ENCODE measurements at regions of chr21 and their contacts with region 1.

Region 1: GRCh38 chr21:31088315-31088714 is 50.0 kb upstream of the KRTAP19-8 start:
- DNase-seq: no peak
- ATAC-seq: no peak
- H3K4me3 Mint-ChIP-seq: no peak overlapping the region
- H3K27ac Mint-ChIP-seq: no peak overlapping the region
- H3K4me1 Mint-ChIP-seq: peaks cover 10% of the 10 kb centered on the region
- H3K27me3 Mint-ChIP-seq: peaks cover 47% of the 10 kb centered on the region

Region 2: DNA sequence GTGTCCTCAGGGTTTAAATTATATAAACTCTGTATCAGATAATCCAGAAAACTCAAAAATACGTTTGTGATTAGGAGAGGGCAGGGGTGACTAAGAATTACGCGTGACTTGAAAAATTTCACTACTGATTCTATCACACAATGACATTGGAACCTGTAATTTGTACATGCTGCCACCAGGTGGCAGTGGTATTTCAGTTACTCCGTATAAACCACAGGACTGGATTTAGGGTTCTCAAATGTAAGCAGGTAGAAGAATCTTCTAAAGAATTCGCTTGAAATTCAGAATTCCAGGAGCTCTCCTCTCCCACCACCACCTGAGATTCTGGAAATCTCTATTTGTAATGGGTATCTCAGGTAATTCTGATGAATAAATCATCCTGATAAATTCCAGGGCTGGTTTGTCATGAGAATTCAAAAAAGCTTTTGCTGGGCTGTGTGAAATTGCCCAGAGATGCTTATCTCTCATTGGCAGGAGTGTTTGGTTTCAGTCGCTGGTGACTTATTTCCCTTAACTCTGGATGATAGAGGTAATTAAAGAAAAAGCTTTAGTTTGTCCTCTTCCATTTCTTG is 257.0 kb before region 1 on chr21:
- CTCF ChIA-PET with region 1: interaction called, 28 read pairs
- DNase-seq: peak; percentile 49
- ATAC-seq: no peak
- H3K4me3 Mint-ChIP-seq: no peak overlapping the region
- H3K27ac Mint-ChIP-seq: no peak overlapping the region
- H3K4me1 Mint-ChIP-seq: no peaks in the 10 kb centered on the region
- H3K27me3 Mint-ChIP-seq: peaks cover 8% of the 10 kb centered on the region

Region 3: GRCh38 chr21:31161157-31161556 is 72.8 kb after region 1 on chr21:
- CTCF ChIA-PET with region 1: no interaction called
- DNase-seq: no peak
- ATAC-seq: no peak
- H3K4me3 Mint-ChIP-seq: no peak overlapping the region
- H3K27ac Mint-ChIP-seq: no peak overlapping the region
- H3K4me1 Mint-ChIP-seq: peaks cover 15% of the 10 kb centered on the region
- H3K27me3 Mint-ChIP-seq: peaks cover 3% of the 10 kb centered on the region

Measured in activated CD8-positive, alpha-beta memory T cell treated with anti-CD3 and anti-CD28 coated beads, Interleukin-2, amount 10 ng/mL, durations not matched to agents 7 days and 5 days (primary cell).